IMR-90 (cell line): ENCODE measurements at regions of chr3 and their contacts with region 1.

Region 1: DNA sequence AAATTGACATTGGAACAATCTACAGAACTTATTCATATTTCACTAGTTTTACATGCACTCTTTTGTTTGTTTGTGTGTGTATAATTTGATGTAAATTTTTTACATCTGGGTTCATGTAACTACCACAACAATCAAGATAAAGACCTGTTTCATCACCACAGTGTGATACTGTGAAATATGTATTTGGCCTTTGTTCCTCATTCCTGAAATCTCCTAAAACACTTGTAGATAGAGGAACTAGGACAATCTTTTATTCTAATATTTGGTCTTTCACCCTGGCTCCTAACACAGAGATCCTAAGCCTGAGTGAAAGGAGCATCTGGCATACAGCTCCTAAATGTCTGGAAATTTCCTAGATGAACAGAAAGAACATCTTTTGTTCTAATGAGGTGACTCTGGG is 155.0 kb upstream of the GPR149 start:
- DNase-seq: no peak
- ATAC-seq: no peak
- H3K4me3 ChIP-seq: no peak overlapping the region
- H3K27ac ChIP-seq: no peak overlapping the region
- H3K4me1 ChIP-seq: no peaks in the 10 kb centered on the region
- H3K27me3 ChIP-seq: no peaks in the 10 kb centered on the region
- CTCF ChIP-seq: no peak
- POLR2A ChIP-seq: no peak
- RAD21 ChIP-seq: no peak

Region 2: GRCh38 chr3:154540950-154541604 is 43.9 kb before region 1 on chr3:
- CTCF ChIA-PET with region 1: no interaction called
- POLR2A ChIA-PET with region 1: no interaction called
- dilution Hi-C with region 1: no loop called
- in situ Hi-C with region 1: no loop called
- intact Hi-C with region 1: no loop called
- DNase-seq: no peak
- ATAC-seq: no peak
- H3K4me3 ChIP-seq: no peak overlapping the region
- H3K27ac ChIP-seq: no peak overlapping the region
- H3K4me1 ChIP-seq: no peaks in the 10 kb centered on the region
- H3K27me3 ChIP-seq: no peaks in the 10 kb centered on the region
- CTCF ChIP-seq: no peak
- POLR2A ChIP-seq: no peak
- RAD21 ChIP-seq: no peak

Region 3: GRCh38 chr3:154684021-154684420 is 99.0 kb after region 1 on chr3:
- CTCF ChIA-PET with region 1: no interaction called
- POLR2A ChIA-PET with region 1: no interaction called
- dilution Hi-C with region 1: no loop called
- in situ Hi-C with region 1: loop called (anchors 25 kb)
- intact Hi-C with region 1: no loop called
- DNase-seq: no peak
- ATAC-seq: no peak
- H3K4me3 ChIP-seq: no peak overlapping the region
- H3K27ac ChIP-seq: no peak overlapping the region
- H3K4me1 ChIP-seq: no peaks in the 10 kb centered on the region
- H3K27me3 ChIP-seq: no peaks in the 10 kb centered on the region
- CTCF ChIP-seq: no peak
- POLR2A ChIP-seq: no peak
- RAD21 ChIP-seq: no peak

Region 4: GRCh38 chr3:154718053-154718452 is 133.1 kb after region 1 on chr3:
- CTCF ChIA-PET with region 1: no interaction called
- POLR2A ChIA-PET with region 1: no interaction called
- dilution Hi-C with region 1: no loop called
- in situ Hi-C with region 1: no loop called
- intact Hi-C with region 1: no loop called
- DNase-seq: no peak
- ATAC-seq: no peak
- H3K4me3 ChIP-seq: no peak overlapping the region
- H3K27ac ChIP-seq: no peak overlapping the region
- H3K4me1 ChIP-seq: no peaks in the 10 kb centered on the region
- H3K27me3 ChIP-seq: no peaks in the 10 kb centered on the region
- CTCF ChIP-seq: no peak
- POLR2A ChIP-seq: no peak
- RAD21 ChIP-seq: no peak